ENCODE measurements at regions of chr4 and their contacts with region 1.

Region 1: DNA sequence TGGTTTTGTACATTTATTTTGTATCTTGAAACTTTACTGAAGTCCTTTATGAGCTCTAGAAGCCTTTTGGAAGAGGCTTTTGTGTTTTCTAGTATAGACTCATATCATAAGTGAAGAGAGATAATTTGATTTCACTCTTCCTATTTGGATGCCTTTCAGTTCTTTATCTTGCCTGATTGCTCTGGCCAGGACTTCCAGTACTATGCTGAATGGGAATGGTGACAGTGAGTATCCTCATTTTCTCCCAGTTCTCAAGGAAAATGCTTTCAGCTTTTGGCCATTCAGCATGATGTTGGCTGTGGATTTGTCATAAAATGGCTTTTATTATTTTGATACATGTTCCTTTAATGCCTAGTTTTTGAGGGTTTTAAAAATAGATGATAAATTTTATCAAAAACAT is 1061.3 kb downstream of the STPG2 start:
- DNase-seq: peak in 1 of 10 donors; percentile 11
- H3K4me3 ChIP-seq: no peak overlapping the region
- H3K27ac ChIP-seq: no peak overlapping the region
- H3K27me3 ChIP-seq: peaks cover 0 to under 1% (median 0%) of the 10 kb centered on the region in 45 donors
- CTCF ChIP-seq: no peak

Region 2: DNA sequence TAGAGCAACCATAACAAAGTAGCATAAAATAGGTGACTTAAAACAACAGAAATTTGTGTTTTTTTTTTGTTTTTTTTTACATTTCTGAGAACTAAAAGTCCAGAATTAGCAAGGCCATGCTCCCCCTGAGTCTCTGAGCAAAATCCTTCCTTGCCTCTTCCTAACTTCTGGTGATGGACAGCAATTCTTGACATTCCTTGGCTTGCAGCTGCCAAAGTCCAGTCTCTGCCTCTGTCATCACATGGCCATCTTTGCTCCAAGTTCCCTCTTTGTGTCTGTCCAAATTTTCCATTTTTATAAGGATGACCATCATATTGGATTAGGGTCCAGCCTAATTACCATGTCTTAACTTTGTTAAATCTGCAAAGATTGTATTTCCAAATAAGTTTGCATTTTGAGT is 834.9 kb before region 1 on chr4:
- intact Hi-C with region 1: loop called in 1 of 2 experiments (anchors 5 kb)
- DNase-seq: no peak
- H3K4me3 ChIP-seq: no peak overlapping the region
- H3K27ac ChIP-seq: no peak overlapping the region
- H3K27me3 ChIP-seq: no peaks in the 10 kb centered on the region
- CTCF ChIP-seq: no peak

Region 3: DNA sequence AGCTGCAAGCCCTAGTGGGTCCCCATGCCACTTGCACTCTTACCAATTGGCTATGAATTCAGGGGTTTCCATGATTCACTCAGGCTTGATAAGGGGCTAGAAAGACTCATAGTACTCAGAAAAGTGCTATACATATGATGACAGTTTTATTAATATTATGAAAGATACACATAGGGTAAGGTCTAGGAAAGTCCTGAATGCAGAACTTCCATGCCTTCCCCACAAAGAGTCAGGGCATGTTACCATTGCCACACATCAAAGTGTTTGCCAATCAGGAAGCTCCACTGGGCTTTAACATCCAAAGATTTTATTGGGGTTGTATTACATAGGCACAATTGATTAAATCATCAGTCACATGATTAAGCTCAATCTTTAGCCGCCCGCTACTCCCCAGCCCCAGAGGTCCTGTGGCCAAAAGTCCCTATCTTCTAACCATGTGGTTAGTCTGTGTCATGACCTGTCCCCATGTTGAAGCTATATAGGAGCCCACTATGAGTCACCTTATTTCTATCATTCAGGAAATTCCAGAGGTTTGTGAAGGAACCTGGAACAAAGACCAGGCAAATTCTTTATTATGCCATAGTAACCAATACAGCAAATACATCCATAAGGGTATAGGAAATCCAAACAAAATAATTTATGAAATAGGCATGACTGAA is 425.8 kb after region 1 on chr4:
- intact Hi-C with region 1: no loop called
- DNase-seq: no peak
- H3K4me3 ChIP-seq: no peak overlapping the region
- H3K27ac ChIP-seq: no peak overlapping the region
- H3K27me3 ChIP-seq: no peaks in the 10 kb centered on the region
- CTCF ChIP-seq: no peak